ENCODE measurements at regions of chr9 and their contacts with region 1.

Region 1: GRCh38 chr9:111759762-111760639 is 34.7 kb downstream of the SHOC1 start:
- DNase-seq: peak; percentile 79
- ATAC-seq: peak; percentile 76
- H3K4me3 ChIP-seq: no peak overlapping the region
- H3K27ac ChIP-seq: peak overlapping the region; percentile 34; the same call in 1 of the 2 replicates
- H3K4me1 ChIP-seq: no peaks in the 10 kb centered on the region; the same call in 1 of the 2 replicates
- H3K27me3 ChIP-seq: no peaks in the 10 kb centered on the region
- CTCF ChIP-seq: peak; percentile 73

Region 2: DNA sequence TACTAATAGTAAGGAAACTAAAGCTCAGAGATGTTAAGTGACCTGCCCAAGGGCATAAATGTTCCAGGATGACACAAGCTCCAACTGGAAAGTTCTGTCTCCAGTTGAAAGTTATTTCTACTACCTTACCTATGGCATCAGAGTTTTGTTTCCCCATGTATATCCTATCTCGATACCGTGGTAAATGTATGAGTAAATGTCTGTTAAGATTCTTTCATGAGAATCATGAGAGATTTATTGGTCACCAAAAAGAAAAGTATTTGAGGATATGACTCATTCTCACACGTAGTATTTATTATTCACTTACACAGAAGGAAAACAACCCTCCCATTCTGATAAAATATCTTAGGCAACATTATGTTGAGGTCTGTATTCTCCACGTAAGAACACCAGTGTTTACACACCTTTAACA is 45.8 kb after region 1 on chr9:
- CTCF ChIA-PET with region 1: no interaction called
- POLR2A ChIA-PET with region 1: no interaction called
- intact Hi-C with region 1: loop called (anchors 5 kb)
- DNase-seq: peak; percentile 88
- ATAC-seq: peak; percentile 96
- H3K4me3 ChIP-seq: peak overlapping the region; percentile 25; the same call in 1 of the 2 replicates
- H3K27ac ChIP-seq: peak overlapping the region; percentile 99
- H3K4me1 ChIP-seq: peaks cover 27% of the 10 kb centered on the region
- H3K27me3 ChIP-seq: no peaks in the 10 kb centered on the region
- CTCF ChIP-seq: no peak

Region 3: GRCh38 chr9:112020680-112021596 is 260.9 kb after region 1 on chr9:
- CTCF ChIA-PET with region 1: no interaction called
- POLR2A ChIA-PET with region 1: no interaction called
- intact Hi-C with region 1: loop called (anchors 2 kb)
- DNase-seq: peak; percentile 89
- ATAC-seq: peak; percentile 90
- H3K4me3 ChIP-seq: no peak overlapping the region
- H3K27ac ChIP-seq: peak overlapping the region; percentile 95
- H3K4me1 ChIP-seq: peaks cover 23% of the 10 kb centered on the region
- H3K27me3 ChIP-seq: no peaks in the 10 kb centered on the region
- CTCF ChIP-seq: no peak

Region 4: GRCh38 chr9:112074250-112075008 is 314.4 kb after region 1 on chr9:
- CTCF ChIA-PET with region 1: interaction called, 3 read pairs
- POLR2A ChIA-PET with region 1: no interaction called
- intact Hi-C with region 1: loop called (anchors 1 kb)
- DNase-seq: peak; percentile 86
- ATAC-seq: peak; percentile 78
- H3K4me3 ChIP-seq: no peak overlapping the region
- H3K27ac ChIP-seq: peak overlapping the region; percentile 81
- H3K4me1 ChIP-seq: peaks cover 28% of the 10 kb centered on the region
- H3K27me3 ChIP-seq: no peaks in the 10 kb centered on the region
- CTCF ChIP-seq: peak; percentile 93

Measured in PC-3 (cell line).